CD8-positive, alpha-beta T cell (primary cell): ENCODE measurements at regions of chr17 and their contacts with region 1.

Region 1: GRCh38 chr17:58112970-58113631 is 29.9 kb downstream of the DYNLL2 start:
- DNase-seq: peak; percentile 76 to 89 (median 83)
- ATAC-seq: peak; percentile 99
- H3K4me3 ChIP-seq: no peak overlapping the region
- H3K4me3 Mint-ChIP-seq: no peak overlapping the region
- H3K27ac ChIP-seq: no peak overlapping the region
- H3K27ac Mint-ChIP-seq: no peak overlapping the region
- H3K4me1 ChIP-seq: no peaks in the 10 kb centered on the region
- H3K4me1 Mint-ChIP-seq: peaks cover 5% of the 10 kb centered on the region
- H3K27me3 ChIP-seq: no peaks in the 10 kb centered on the region
- H3K27me3 Mint-ChIP-seq: peaks cover 24% of the 10 kb centered on the region
- CTCF ChIP-seq: peak; percentile 96

Region 2: GRCh38 chr17:57752031-57752905 is 360.8 kb before region 1 on chr17:
- CTCF ChIA-PET with region 1: no interaction called
- POLR2A ChIA-PET with region 1: no interaction called
- intact Hi-C with region 1: no loop called
- DNase-seq: no peak
- ATAC-seq: no peak
- H3K4me3 ChIP-seq: no peak overlapping the region
- H3K4me3 Mint-ChIP-seq: no peak overlapping the region
- H3K27ac ChIP-seq: no peak overlapping the region
- H3K27ac Mint-ChIP-seq: no peak overlapping the region
- H3K4me1 ChIP-seq: peaks cover 6% of the 10 kb centered on the region
- H3K4me1 Mint-ChIP-seq: peaks cover 10% of the 10 kb centered on the region
- H3K27me3 ChIP-seq: no peaks in the 10 kb centered on the region
- H3K27me3 Mint-ChIP-seq: no peaks in the 10 kb centered on the region
- CTCF ChIP-seq: no peak

Region 3: DNA sequence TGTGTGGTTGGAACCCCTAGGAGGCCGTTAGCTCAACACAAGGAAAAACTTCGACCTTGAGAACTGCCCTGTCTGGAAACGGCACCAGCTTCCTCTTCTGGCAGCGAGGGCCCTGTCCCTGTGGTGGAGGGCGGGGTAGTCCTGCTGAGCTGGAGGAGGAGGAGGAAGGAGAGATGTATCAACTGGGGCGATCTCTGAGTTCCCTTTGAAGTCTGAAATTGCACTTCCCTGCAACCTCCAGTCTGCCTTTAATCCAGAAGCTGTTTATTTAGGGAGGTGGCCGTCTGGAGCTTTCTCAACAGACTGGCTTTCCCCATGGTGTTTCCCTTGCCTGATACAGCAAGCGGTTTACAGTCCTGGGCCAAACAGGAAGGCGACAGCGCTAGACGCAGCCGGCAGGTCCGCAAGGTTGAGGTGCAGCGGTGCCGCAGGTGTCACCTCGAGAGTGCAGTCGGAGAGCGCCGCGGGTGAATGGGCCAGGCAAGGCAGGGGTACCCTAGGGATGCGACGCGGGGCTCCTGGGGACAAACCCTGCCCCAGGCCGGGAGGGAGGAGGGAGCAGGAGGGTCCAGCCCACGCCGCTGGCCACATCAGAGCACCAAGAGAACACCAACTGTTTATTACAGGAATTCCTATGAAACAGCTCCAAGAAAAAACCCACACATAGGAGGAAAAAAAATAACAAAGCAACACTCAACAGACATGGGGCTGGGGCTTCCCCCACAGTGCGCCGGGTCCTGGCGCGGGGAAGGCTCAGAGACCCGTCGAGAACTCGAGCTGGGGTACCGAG is 251.9 kb before region 1 on chr17:
- CTCF ChIA-PET with region 1: interaction called, 64 read pairs
- POLR2A ChIA-PET with region 1: no interaction called
- intact Hi-C with region 1: loop called (anchors 1 kb)
- DNase-seq: peak in 8 of 9 experiments; percentile 19 to 68 (median 41)
- ATAC-seq: peak; percentile 70
- H3K4me3 ChIP-seq: peak overlapping the region; percentile 34
- H3K4me3 Mint-ChIP-seq: peak overlapping the region; percentile 83
- H3K27ac ChIP-seq: no peak overlapping the region
- H3K27ac Mint-ChIP-seq: peak overlapping the region; percentile 41
- H3K4me1 ChIP-seq: peaks cover 11% of the 10 kb centered on the region
- H3K4me1 Mint-ChIP-seq: peaks cover 14% of the 10 kb centered on the region
- H3K27me3 ChIP-seq: peaks cover 0 to 7% of the 10 kb centered on the region in 2 experiments
- H3K27me3 Mint-ChIP-seq: peaks cover 10% of the 10 kb centered on the region
- CTCF ChIP-seq: no peak

Region 4: DNA sequence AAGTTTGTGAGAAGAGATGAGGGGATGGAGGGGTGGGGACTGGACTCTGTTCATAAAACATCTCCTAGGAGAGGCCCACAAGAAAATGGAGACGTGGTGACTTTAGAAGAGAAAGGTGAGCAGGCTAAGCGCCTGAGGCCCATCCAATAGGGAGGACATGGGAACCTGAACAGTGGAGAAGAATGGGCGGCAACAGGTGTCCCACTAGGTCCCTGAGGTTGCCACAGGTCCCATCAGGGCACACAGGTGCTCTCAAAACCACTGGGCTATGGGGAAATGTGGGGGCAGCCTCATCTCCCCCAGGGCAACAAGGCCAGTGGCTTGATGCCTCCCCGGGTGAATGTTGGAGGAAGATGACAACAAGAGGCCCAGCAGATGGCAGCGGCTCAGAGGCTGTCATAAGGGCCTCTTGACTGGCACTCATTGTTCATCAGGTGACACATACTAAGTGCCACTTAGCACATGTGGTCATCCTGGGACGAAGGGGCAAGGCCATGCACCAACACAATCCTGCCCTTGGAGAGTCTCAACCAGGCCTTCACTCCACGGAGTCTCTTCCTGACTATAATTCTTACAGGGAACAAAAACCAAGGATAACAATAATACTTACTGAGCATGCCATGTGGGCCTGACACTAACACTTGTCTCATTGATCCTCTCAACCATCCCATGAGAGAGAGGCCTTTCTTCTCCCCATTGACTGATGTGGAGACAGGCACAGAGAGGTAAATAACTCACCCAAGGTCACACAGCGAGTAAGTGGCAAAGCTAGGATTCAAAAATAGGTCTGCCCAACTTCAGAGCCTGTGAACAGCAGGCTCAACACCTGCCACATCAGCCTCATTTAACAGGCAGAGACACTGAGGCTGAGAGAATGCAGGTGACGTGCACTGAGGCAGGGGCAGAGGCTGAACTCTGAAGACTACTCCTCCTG is 195.9 kb before region 1 on chr17:
- CTCF ChIA-PET with region 1: interaction called, 5 read pairs
- POLR2A ChIA-PET with region 1: no interaction called
- intact Hi-C with region 1: loop called in 1 of 2 experiments (anchors 1 kb)
- DNase-seq: peak in 6 of 9 experiments; percentile 31 to 64 (median 49)
- ATAC-seq: peak; percentile 62
- H3K4me3 ChIP-seq: no peak overlapping the region
- H3K4me3 Mint-ChIP-seq: no peak overlapping the region
- H3K27ac ChIP-seq: no peak overlapping the region
- H3K27ac Mint-ChIP-seq: no peak overlapping the region
- H3K4me1 ChIP-seq: no peaks in the 10 kb centered on the region
- H3K4me1 Mint-ChIP-seq: no peaks in the 10 kb centered on the region
- H3K27me3 ChIP-seq: no peaks in the 10 kb centered on the region
- H3K27me3 Mint-ChIP-seq: peaks cover 2% of the 10 kb centered on the region
- CTCF ChIP-seq: no peak

Region 5: GRCh38 chr17:58082870-58083490 is 30.1 kb before region 1 on chr17 and contains the start of gene DYNLL2:
- CTCF ChIA-PET with region 1: interaction called, 10 read pairs
- POLR2A ChIA-PET with region 1: no interaction called
- intact Hi-C with region 1: loop called (anchors 1 kb)
- DNase-seq: peak; percentile 76 to 93 (median 88)
- ATAC-seq: peak; percentile 69
- H3K4me3 ChIP-seq: peak within 1 kb of the TSS; percentile 60 to 62
- H3K4me3 Mint-ChIP-seq: peak within 1 kb of the TSS; percentile 89
- H3K27ac ChIP-seq: peak within 1 kb of the TSS; percentile 81 to 85
- H3K27ac Mint-ChIP-seq: peak within 1 kb of the TSS; percentile 88
- H3K4me1 ChIP-seq: peaks cover 33% of the 10 kb centered on the region
- H3K4me1 Mint-ChIP-seq: peaks cover 33% of the 10 kb centered on the region
- H3K27me3 ChIP-seq: no peaks in the 10 kb centered on the region
- H3K27me3 Mint-ChIP-seq: no peaks in the 10 kb centered on the region
- CTCF ChIP-seq: no peak
- total RNA-seq, gene DYNLL2: 30.5 to 30.6 TPM

Region 6: DNA sequence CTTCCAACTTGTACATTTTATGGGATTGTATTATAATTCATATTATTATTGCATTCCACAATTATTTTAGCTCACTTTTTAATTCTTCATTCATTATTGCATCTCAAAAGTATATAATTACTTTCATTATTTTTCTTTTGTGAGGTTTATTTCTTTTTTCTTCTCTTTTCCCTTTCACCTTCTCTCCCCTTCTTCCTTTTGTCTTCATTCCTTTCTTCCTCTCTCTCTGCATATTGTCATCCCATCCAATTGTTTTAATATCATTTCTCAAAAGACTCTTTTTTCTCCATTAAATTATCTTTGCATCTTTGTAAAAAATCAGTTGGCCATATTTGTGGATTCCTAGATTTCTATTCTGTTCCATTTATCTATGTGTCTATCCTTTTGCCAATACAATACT is 12.6 kb before region 1 on chr17:
- CTCF ChIA-PET with region 1: interaction called, 16 read pairs
- POLR2A ChIA-PET with region 1: no interaction called
- intact Hi-C with region 1: no loop called
- DNase-seq: no peak
- ATAC-seq: no peak
- H3K4me3 ChIP-seq: no peak overlapping the region
- H3K4me3 Mint-ChIP-seq: no peak overlapping the region
- H3K27ac ChIP-seq: no peak overlapping the region
- H3K27ac Mint-ChIP-seq: no peak overlapping the region
- H3K4me1 ChIP-seq: no peaks in the 10 kb centered on the region
- H3K4me1 Mint-ChIP-seq: peaks cover 3% of the 10 kb centered on the region
- H3K27me3 ChIP-seq: no peaks in the 10 kb centered on the region
- H3K27me3 Mint-ChIP-seq: no peaks in the 10 kb centered on the region
- CTCF ChIP-seq: no peak

Region 7: DNA sequence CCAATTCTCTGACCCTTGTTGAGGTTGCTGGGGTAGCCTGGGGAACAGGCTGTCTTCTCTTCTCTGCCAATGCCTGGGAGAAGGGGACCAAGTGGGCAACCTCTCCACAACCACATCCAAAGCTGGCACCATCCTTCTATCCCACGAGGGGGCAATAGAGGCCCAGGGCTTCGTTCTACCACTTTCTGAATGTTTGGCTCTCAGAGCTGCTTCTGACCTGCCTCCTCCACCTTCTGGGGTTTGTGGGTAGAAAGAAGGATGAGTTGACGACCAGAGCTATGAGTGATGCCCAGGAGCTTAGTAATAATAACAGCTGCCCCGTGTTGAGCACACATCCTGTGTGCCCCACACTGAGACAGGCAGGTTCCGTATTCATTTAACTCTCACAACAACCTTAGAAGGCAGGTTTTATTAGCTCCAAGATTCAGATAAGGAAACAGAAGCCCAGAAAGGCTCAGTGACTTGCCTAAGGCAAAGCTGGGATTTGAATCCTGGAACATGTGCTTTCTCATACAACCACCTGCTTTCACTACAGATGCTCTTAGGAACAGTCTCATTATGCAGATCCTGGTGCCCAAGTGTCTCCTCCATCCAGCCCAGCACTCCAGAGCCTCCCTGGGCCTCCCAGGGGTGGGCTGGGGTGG is 204.4 kb after region 1 on chr17:
- CTCF ChIA-PET with region 1: no interaction called
- POLR2A ChIA-PET with region 1: no interaction called
- intact Hi-C with region 1: no loop called
- DNase-seq: peak; percentile 57 to 92 (median 76)
- ATAC-seq: peak; percentile 97
- H3K4me3 ChIP-seq: no peak overlapping the region
- H3K4me3 Mint-ChIP-seq: peak overlapping the region; percentile 21
- H3K27ac ChIP-seq: peak overlapping the region; percentile 36 to 64
- H3K27ac Mint-ChIP-seq: peak overlapping the region; percentile 91
- H3K4me1 ChIP-seq: peaks cover 11% of the 10 kb centered on the region
- H3K4me1 Mint-ChIP-seq: peaks cover 13% of the 10 kb centered on the region
- H3K27me3 ChIP-seq: no peaks in the 10 kb centered on the region
- H3K27me3 Mint-ChIP-seq: no peaks in the 10 kb centered on the region
- CTCF ChIP-seq: peak; percentile 78

Region 8: GRCh38 chr17:58643140-58643539 is 530.0 kb after region 1 on chr17:
- CTCF ChIA-PET with region 1: no interaction called
- POLR2A ChIA-PET with region 1: no interaction called
- intact Hi-C with region 1: no loop called
- DNase-seq: no peak
- ATAC-seq: no peak
- H3K4me3 ChIP-seq: no peak overlapping the region
- H3K4me3 Mint-ChIP-seq: no peak overlapping the region
- H3K27ac ChIP-seq: no peak overlapping the region
- H3K27ac Mint-ChIP-seq: no peak overlapping the region
- H3K4me1 ChIP-seq: no peaks in the 10 kb centered on the region
- H3K4me1 Mint-ChIP-seq: no peaks in the 10 kb centered on the region
- H3K27me3 ChIP-seq: no peaks in the 10 kb centered on the region
- H3K27me3 Mint-ChIP-seq: no peaks in the 10 kb centered on the region
- CTCF ChIP-seq: no peak